ENCODE measurements at regions of chr14 and their contacts with region 1.

Region 1: DNA sequence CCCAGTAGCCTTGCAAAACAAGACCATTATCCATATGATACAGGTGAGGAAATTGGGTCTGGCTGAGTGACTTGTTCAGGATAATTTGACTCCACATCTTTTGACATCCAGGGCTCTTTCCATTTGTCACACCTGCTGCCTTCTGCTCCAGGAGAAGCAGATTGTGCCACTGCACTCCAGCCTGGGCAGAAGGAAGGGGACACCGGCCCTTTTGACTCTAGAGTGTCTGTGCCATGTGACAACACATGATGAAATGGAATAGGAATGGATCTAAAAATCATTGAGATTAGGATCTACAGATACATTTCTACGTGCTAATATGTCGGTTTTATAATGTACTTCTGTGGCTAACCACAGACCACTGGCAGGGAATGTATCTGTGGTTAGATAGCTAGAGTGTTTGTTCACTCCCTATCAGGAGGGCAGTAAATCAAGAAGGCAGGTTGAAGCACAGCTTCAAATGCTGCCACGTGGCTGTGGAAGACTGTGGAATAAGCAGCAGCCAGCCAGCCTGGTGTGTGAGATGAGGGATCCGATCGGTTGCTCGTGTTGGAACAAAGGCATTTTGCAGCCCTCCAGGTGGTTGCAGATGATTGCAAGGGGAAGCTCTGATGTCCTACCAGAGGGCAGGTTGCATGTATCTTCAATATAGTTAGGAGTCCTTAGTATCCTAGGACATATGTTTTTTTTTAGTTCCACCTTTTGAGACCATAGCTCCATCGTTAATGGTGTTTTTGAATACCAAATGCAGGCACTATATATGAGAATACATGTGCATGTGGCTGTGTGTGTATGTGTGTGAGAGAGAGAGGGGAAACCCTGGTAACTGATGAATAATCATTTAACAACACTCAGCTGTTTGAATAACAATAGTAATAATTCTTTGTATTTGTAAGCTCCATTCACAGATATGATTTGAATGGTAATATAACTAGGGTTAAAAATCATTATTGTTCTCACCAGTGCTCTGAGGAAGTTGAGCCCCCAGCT is 28.6 kb downstream of the EML1 start:
- DNase-seq: peak; percentile 72
- H3K4me3 ChIP-seq: no peak overlapping the region
- H3K27me3 ChIP-seq: peaks cover 26% of the 10 kb centered on the region
- CTCF ChIP-seq: no peak

Region 2: DNA sequence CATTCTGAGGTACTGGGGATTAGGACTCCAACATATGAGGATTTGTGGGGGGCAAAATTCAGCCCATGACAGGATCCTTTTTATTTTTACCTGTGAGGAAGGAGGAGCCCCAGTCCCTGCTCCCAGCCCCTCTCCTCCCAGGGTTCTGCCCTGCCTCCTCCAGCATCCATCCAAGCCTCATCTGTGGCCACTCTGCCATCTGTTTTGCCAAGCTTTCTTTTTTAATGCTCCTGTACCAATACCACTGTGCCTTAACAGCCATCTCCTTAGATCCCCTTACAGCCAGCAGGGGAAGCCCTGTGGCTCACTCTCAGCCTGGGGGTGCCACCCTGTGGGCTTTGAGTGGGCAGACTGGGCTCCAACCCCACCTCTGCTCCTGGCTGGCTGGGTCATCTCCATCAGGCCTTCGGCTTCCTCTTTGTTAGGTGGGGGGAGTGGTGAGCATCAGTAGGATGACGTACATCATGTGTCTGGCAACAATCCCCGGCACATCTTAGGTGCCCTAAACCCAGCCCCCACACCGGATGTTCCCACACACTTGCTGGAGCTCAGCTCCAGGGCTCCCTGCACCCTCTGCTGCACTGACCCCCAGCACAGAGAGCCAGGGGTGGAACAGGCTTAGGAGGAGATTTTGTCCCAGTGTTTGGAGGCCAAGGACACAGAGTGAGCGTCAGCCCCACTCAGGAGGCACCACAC is 97.5 kb before region 1 on chr14:
- CTCF ChIA-PET with region 1: no interaction called
- POLR2A ChIA-PET with region 1: no interaction called
- DNase-seq: no peak
- H3K4me3 ChIP-seq: no peak overlapping the region
- H3K27me3 ChIP-seq: peaks cover 10% of the 10 kb centered on the region
- CTCF ChIP-seq: 0 out of 2 replicates have a peak, but pooled peaks have one; percentile 10

Region 3: GRCh38 chr14:99809360-99809759 is 12.5 kb before region 1 on chr14:
- CTCF ChIA-PET with region 1: interaction called, 11 read pairs
- POLR2A ChIA-PET with region 1: no interaction called
- DNase-seq: peak; percentile 50
- H3K4me3 ChIP-seq: no peak overlapping the region
- H3K27me3 ChIP-seq: peaks cover 13% of the 10 kb centered on the region
- CTCF ChIP-seq: no peak

Region 4: DNA sequence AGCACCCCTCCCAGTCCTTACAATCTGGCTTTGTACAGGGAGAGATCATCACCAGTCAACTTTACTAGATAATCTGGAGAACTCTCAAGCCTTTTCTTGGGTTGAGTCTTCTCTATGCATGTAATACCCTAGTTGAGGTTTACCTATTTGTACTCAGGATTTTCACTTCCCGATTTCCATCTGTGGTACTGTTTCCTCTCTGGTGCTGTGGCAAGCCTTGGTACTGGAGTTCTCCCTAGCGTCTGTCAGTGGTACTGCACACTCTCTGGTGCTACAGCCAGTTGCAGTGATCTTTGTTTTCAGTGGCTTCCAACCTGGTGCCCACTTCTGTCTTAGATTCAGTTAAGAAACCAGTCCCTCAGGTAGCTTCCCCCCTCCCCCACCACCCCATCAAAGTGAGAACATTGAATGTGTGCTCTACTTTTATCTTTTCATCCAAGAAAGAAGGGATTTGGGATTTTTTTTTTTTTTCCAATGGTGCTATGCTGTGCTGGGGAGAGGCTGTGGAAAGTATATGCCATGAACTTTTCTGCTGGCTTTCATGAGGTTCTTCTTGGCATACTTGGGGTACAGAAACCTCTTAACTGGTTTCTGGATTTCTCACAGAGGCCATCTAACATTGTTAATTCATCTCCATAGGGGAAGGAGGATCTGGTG is 174.0 kb after region 1 on chr14:
- CTCF ChIA-PET with region 1: no interaction called
- POLR2A ChIA-PET with region 1: no interaction called
- DNase-seq: no peak
- H3K4me3 ChIP-seq: no peak overlapping the region
- H3K27me3 ChIP-seq: no peaks in the 10 kb centered on the region
- CTCF ChIP-seq: peak; percentile 76

Measured in BJ (cell line).